ENCODE measurements at regions of chr1 and their contacts with region 1.

Region 1: GRCh38 chr1:204763706-204764427 is 78.3 kb upstream of the LRRN2 start:
- DNase-seq: peak; percentile 12
- H3K4me3 ChIP-seq: no peak overlapping the region
- CTCF ChIP-seq: peak; percentile 83

Region 2: GRCh38 chr1:204565617-204566582 is 198.0 kb before region 1 on chr1:
- CTCF ChIA-PET with region 1: interaction called, 162 read pairs
- POLR2A ChIA-PET with region 1: no interaction called
- DNase-seq: no peak
- H3K4me3 ChIP-seq: no peak overlapping the region
- CTCF ChIP-seq: peak; percentile 54

Region 3: GRCh38 chr1:204572931-204573891 is 190.7 kb before region 1 on chr1:
- CTCF ChIA-PET with region 1: interaction called, 162 read pairs
- POLR2A ChIA-PET with region 1: no interaction called
- DNase-seq: no peak
- H3K4me3 ChIP-seq: no peak overlapping the region
- CTCF ChIP-seq: no peak

Region 4: GRCh38 chr1:204746838-204747442 is 16.9 kb before region 1 on chr1:
- CTCF ChIA-PET with region 1: interaction called, 40 read pairs
- POLR2A ChIA-PET with region 1: no interaction called
- DNase-seq: no peak
- H3K4me3 ChIP-seq: no peak overlapping the region
- CTCF ChIP-seq: peak; percentile 94

Region 5: DNA sequence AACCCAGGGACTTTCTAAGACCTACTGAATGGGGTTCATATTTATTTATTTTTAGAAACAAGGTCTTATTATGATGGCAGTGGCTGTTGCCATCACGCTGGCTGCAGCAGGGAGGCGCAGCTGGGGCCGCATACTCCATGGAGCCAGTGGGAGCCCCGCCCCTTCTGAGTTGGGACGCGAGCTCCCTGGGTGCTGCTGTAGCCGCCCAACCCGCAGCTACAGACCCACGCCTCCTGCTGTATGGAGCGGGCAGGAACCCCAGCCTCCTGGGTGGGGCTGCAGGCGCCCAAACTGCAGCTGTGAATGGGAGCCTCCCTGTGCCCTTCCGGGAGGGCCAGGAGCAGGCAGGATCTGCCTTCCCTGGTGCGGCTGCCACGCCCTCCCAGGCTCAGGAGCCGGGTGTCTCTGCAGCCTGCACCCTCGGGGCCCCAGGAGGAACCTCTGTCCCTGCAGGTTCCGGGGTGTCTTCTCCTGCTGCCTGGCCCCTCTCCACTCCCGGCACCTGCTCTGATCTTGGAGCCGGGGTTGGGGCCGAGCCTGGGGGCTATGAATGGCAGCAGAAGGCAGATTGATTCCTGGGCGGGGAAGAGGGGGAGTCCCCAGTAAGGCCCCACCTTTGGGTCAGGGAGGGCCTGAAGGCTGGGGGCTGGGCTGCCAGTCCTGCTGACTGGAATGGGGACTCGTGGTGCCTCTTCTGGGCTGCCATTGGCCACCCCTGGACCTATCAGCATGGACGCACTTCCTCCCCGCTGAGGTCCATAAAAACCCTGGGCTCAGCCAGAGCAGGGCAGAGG is 11.8 kb before region 1 on chr1:
- CTCF ChIA-PET with region 1: interaction called, 40 read pairs
- POLR2A ChIA-PET with region 1: no interaction called
- DNase-seq: no peak
- H3K4me3 ChIP-seq: no peak overlapping the region
- CTCF ChIP-seq: no peak

Region 6: GRCh38 chr1:204782118-204782700 is 18.3 kb after region 1 on chr1:
- CTCF ChIA-PET with region 1: interaction called, 18 read pairs
- POLR2A ChIA-PET with region 1: no interaction called
- DNase-seq: no peak
- H3K4me3 ChIP-seq: no peak overlapping the region
- CTCF ChIP-seq: no peak

Region 7: GRCh38 chr1:204791453-204792353 is 27.8 kb after region 1 on chr1:
- CTCF ChIA-PET with region 1: interaction called, 17 read pairs
- POLR2A ChIA-PET with region 1: no interaction called
- DNase-seq: no peak
- H3K4me3 ChIP-seq: no peak overlapping the region
- CTCF ChIP-seq: peak; percentile 68

Region 8: GRCh38 chr1:204909109-204909508 is 145.2 kb after region 1 on chr1:
- CTCF ChIA-PET with region 1: no interaction called
- POLR2A ChIA-PET with region 1: no interaction called
- DNase-seq: no peak
- H3K4me3 ChIP-seq: no peak overlapping the region
- CTCF ChIP-seq: no peak